ENCODE measurements at regions of chr19 and their contacts with region 1.

Region 1: DNA sequence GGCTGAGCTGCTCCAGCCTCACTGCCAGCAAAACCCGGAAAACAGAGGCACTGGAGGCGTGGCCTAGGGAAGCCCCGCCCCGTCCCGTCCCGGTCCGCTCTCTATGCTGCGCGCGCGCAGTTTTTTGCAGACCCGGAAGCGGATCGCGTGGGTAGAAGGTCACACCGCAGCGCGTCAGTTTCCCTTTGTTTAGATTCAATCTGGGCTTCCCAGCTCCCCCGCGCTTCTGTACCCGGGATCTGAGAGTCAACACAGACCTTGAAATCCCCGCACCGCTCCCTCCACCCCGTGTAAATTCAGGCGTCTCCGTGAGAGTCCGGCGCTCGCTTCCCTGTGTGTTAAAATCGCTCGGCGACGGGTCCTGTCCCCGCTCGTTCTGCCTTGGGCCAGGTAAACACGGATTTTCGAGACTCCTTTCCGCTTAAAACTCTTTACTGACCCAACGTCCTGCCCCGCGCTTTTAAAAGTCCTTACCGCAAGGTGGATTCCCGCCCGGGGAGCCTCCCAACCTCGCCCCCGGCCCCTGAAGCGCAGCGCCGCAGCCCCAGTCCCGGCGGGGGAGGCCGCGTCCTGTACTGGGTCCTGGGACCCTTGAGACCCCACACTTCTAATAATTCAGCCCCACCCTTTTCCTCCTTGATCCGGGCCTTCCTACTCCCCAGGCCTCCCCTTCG is at the start of gene ZNF610:
- DNase-seq: peak; percentile 73 to 88 (median 85)
- ATAC-seq: peak; percentile 99
- H3K4me3 ChIP-seq: peak within 1 kb of the TSS; percentile 88
- H3K4me3 Mint-ChIP-seq: peak within 1 kb of the TSS; percentile 87 to 97 (median 93)
- H3K27ac ChIP-seq: peak within 1 kb of the TSS; percentile 83
- H3K27ac Mint-ChIP-seq: peak within 1 kb of the TSS; percentile 81 to 98 (median 96)
- H3K4me1 ChIP-seq: peaks cover 0 to 6% of the 10 kb centered on the region in 2 donors
- H3K4me1 Mint-ChIP-seq: peaks cover 11 to 19% (median 16%) of the 10 kb centered on the region in 7 donors
- H3K27me3 ChIP-seq: no peaks in the 10 kb centered on the region
- H3K27me3 Mint-ChIP-seq: no peaks in the 10 kb centered on the region
- total RNA-seq, gene ZNF610: 0.42 to 4.3 (median 0.93) TPM

Region 2: GRCh38 chr19:52351511-52351910 is 15.3 kb after region 1 on chr19:
- CTCF ChIA-PET with region 1: no interaction called
- POLR2A ChIA-PET with region 1: no interaction called
- intact Hi-C with region 1: no loop called
- DNase-seq: no peak
- ATAC-seq: no peak
- H3K4me3 ChIP-seq: no peak overlapping the region
- H3K4me3 Mint-ChIP-seq: no peak overlapping the region
- H3K27ac ChIP-seq: no peak overlapping the region
- H3K27ac Mint-ChIP-seq: no peak overlapping the region
- H3K4me1 ChIP-seq: no peaks in the 10 kb centered on the region
- H3K4me1 Mint-ChIP-seq: no peaks in the 10 kb centered on the region
- H3K27me3 ChIP-seq: no peaks in the 10 kb centered on the region
- H3K27me3 Mint-ChIP-seq: no peaks in the 10 kb centered on the region

Region 3: GRCh38 chr19:52535771-52536447 is 199.7 kb after region 1 on chr19:
- CTCF ChIA-PET with region 1: no interaction called
- POLR2A ChIA-PET with region 1: no interaction called
- intact Hi-C with region 1: loop called in 1 of 2 experiments (anchors 1 kb)
- DNase-seq: peak; percentile 60 to 87 (median 82)
- ATAC-seq: peak; percentile 99
- H3K4me3 ChIP-seq: peak overlapping the region; percentile 84
- H3K4me3 Mint-ChIP-seq: peak overlapping the region; percentile 83 to 99 (median 90)
- H3K27ac ChIP-seq: peak overlapping the region; percentile 87
- H3K27ac Mint-ChIP-seq: peak overlapping the region; percentile 69 to 95 (median 87)
- H3K4me1 ChIP-seq: no peaks in the 10 kb centered on the region
- H3K4me1 Mint-ChIP-seq: peaks cover 16 to 44% (median 34%) of the 10 kb centered on the region in 7 donors
- H3K27me3 ChIP-seq: no peaks in the 10 kb centered on the region
- H3K27me3 Mint-ChIP-seq: no peaks in the 10 kb centered on the region